Activated naive CD4-positive, alpha-beta T cell treated with anti-CD3 and anti-CD28 coated beads for 36 hours (primary cell): ENCODE measurements at regions of chr4 and their contacts with region 1.

Region 1: GRCh38 chr4:83217721-83218522 is 66.7 kb downstream of the COQ2 start:
- DNase-seq: peak; percentile 82
- H3K4me3 Mint-ChIP-seq: peak overlapping the region; percentile 28
- H3K27ac Mint-ChIP-seq: peak overlapping the region; percentile 92
- H3K4me1 Mint-ChIP-seq: peaks cover 65% of the 10 kb centered on the region
- H3K27me3 Mint-ChIP-seq: no peaks in the 10 kb centered on the region

Region 2: DNA sequence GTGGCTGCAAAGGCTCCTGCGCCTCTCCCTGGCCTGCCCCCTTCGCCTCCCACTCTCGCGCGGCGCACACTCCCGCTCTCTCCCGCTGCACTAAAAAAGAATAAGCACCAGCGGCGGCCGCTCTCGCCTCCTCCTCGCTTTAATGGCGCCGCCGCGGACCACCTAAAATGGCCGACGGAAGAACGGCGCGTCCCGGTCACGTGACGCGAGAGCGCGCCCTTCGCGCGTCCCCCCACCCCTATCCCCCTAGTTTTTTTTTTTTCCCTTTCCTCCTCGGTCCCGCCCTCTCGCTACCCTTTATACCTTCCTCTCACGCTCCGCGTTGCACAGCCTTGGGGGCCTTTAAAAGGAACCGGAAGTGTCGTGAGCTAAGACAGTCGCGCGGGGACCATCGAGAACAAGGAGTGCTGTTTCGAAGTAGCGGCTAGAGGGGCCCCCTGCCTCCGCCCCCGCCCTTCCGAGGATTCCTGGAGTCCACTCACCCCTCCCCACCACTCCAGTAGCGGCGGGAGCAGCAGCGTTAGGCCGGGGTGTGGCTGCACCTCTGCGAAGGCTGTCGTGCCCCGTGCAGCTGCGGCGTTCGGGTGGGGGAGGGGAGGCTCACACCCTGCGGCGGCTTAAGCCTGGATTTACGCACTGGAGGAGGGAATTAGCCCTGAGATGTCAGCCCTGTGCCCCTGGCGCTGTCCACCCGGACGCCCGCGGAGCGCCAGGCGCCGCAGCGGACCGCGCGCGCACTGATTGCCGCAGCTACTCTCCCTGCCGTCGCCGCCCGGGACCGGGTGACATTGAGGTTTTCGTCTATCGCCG is 843.9 kb before region 1 on chr4 and contains the start of gene HNRNPD:
- CTCF ChIA-PET with region 1: no interaction called
- intact Hi-C with region 1: loop called (anchors 5 kb)
- DNase-seq: peak; percentile 96
- H3K4me3 Mint-ChIP-seq: peak within 1 kb of the TSS; percentile 95
- H3K27ac Mint-ChIP-seq: peak within 1 kb of the TSS; percentile 95
- H3K4me1 Mint-ChIP-seq: peaks cover 33% of the 10 kb centered on the region
- H3K27me3 Mint-ChIP-seq: no peaks in the 10 kb centered on the region
- total RNA-seq, gene HNRNPD: 340 to 367 TPM

Region 3: GRCh38 chr4:82930848-82931755 is 286.8 kb before region 1 on chr4:
- CTCF ChIA-PET with region 1: no interaction called
- intact Hi-C with region 1: no loop called
- DNase-seq: no peak
- H3K4me3 Mint-ChIP-seq: no peak overlapping the region
- H3K27ac Mint-ChIP-seq: no peak overlapping the region
- H3K4me1 Mint-ChIP-seq: no peaks in the 10 kb centered on the region
- H3K27me3 Mint-ChIP-seq: no peaks in the 10 kb centered on the region

Region 4: DNA sequence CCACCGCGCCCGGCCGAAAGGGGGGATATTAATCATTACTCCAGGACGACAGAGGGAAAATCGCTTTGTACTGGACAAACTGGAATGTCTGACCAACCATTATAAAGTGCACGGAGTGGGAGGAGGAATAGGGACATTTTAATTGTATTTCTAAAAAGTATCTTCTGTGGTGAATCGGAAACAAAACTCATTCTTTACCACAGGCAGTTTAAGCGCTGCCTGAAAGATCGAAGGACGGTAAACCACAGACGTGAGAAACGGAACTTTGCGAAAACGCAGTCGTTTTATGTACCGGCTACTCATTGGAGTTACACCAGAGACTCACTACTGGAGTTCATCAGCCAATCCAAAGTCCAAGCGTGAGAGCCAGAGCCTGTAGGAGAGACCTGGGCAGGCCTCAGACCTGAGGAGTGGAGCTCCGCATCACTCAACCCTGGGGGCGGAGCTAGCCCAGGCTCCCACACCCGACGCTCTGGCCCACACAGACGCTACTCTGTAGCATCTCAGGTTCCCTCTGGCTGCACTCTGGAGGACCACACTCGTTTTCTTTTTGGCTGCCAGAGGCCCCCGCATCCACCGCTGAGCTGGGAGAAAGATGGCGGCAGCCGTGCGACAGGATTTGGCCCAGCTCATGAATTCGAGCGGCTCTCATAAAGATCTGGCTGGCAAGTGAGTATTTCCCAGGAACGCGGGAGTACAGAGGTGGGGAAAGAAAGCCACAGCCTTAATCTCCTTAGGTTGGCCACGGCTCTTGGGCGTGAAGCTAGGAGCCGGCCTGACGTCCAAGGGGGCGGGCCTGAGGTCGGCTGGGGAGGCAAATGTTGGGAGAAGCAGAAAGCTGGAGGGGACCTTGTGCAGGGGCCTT is 183.1 kb before region 1 on chr4 and contains the start of gene COPS4:
- CTCF ChIA-PET with region 1: no interaction called
- intact Hi-C with region 1: loop called (anchors 1 kb)
- DNase-seq: peak; percentile 98
- H3K4me3 Mint-ChIP-seq: peak within 1 kb of the TSS; percentile 95
- H3K27ac Mint-ChIP-seq: peak within 1 kb of the TSS; percentile 98
- H3K4me1 Mint-ChIP-seq: peaks cover 36% of the 10 kb centered on the region
- H3K27me3 Mint-ChIP-seq: no peaks in the 10 kb centered on the region
- total RNA-seq, gene COPS4: 37.1 to 38.6 TPM

Region 5: DNA sequence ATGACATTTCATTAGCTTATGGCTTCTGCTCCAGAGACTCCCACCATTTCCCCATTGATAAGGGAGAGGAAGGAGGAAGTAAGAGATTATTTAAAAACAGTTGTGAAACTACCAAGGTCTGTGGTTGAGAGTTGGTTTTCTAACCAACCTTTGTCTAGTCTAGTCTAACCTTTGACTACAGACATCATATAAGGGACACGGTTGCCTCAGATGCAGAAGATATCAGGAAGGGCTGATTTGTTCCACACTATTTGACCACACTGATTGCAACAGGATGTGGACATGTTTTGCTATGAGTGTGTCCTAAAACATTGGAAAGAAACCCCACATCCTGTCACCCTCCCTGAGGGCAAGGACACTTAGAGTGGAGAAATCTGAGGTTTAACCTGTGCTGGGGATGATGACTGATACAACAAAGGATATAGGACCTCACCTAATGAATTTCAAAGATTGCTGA is 13.7 kb after region 1 on chr4:
- CTCF ChIA-PET with region 1: interaction called, 5 read pairs
- intact Hi-C with region 1: loop called (anchors 1 kb)
- DNase-seq: peak; percentile 68
- H3K4me3 Mint-ChIP-seq: no peak overlapping the region
- H3K27ac Mint-ChIP-seq: peak overlapping the region; percentile 16
- H3K4me1 Mint-ChIP-seq: peaks cover 46% of the 10 kb centered on the region
- H3K27me3 Mint-ChIP-seq: peaks cover 3% of the 10 kb centered on the region

Region 6: DNA sequence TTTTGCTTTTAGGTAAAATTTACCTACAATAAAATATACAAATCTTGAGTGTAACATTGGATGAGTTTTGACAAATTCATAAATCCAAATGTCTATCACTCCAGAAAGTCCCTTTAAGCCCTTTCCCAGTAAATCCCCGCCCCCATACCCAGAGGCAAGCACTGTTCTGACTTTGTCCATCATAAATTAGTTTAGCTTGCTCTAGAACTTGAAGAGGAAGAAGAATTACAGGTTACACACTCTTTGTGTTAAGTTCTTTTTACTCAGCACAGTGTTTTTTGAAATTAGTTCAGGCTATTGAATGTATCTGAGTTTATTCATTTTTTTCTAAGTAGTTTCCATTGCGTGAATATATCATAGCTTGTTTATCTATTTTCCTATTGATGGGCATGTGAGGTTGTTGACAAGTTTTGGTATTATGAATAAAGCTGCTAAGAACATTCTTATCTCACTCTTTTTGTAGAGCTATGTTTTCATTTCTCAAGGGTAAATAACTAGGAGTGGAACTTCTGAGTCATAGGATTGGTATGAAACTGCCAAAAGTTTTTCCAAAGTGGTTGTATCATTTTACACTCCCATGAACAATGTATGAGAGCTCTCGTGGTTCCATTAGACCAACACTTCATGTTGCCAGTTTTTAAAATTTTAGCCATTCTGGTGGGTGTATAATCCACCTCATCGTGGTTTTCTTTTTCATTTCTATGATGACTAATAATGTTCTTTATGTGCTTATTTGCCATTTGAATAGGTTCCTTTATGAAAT is 139.2 kb after region 1 on chr4:
- CTCF ChIA-PET with region 1: no interaction called
- intact Hi-C with region 1: loop called (anchors 1 kb)
- DNase-seq: peak; percentile 63
- H3K4me3 Mint-ChIP-seq: no peak overlapping the region
- H3K27ac Mint-ChIP-seq: peak overlapping the region; percentile 62
- H3K4me1 Mint-ChIP-seq: peaks cover 15% of the 10 kb centered on the region
- H3K27me3 Mint-ChIP-seq: no peaks in the 10 kb centered on the region

Region 7: DNA sequence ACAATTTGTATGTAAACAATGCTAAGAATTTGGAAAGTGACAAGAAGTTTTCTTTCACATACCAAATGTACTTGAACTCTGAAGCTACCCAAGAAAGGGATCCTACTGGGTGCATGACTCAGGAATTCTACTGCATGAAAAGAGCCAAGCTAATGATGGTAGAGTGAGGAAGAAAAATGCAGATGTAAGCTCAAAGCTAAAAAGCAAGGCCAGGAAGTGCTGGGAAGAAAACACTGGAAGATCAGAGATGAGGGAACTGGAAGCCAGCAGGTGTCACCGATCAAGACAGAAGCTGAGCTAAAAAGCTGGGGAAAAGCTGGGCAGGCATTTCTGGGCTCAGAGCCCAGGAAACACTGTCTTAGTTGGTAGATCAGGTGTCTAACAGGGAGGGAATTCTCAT is 832.1 kb after region 1 on chr4:
- CTCF ChIA-PET with region 1: no interaction called
- intact Hi-C with region 1: no loop called
- DNase-seq: no peak
- H3K4me3 Mint-ChIP-seq: no peak overlapping the region
- H3K27ac Mint-ChIP-seq: no peak overlapping the region
- H3K4me1 Mint-ChIP-seq: no peaks in the 10 kb centered on the region
- H3K27me3 Mint-ChIP-seq: no peaks in the 10 kb centered on the region